ENCODE measurements at regions of chr1 and their contacts with region 1.

Region 1: GRCh38 chr1:198756470-198756869 is 117.6 kb downstream of the PTPRC start:
- DNase-seq: no peak
- ATAC-seq: peak; percentile 39
- H3K4me3 ChIP-seq: no peak overlapping the region
- H3K4me3 Mint-ChIP-seq: no peak overlapping the region
- H3K27ac ChIP-seq: no peak overlapping the region
- H3K27ac Mint-ChIP-seq: peak overlapping the region; percentile 1
- H3K4me1 ChIP-seq: no peaks in the 10 kb centered on the region
- H3K4me1 Mint-ChIP-seq: peaks cover 34% of the 10 kb centered on the region
- H3K27me3 ChIP-seq: no peaks in the 10 kb centered on the region
- H3K27me3 Mint-ChIP-seq: no peaks in the 10 kb centered on the region
- CTCF ChIP-seq: peak; percentile 15

Region 2: GRCh38 chr1:198713081-198713480 is 43.4 kb before region 1 on chr1:
- CTCF ChIA-PET with region 1: interaction called, 3 read pairs
- POLR2A ChIA-PET with region 1: interaction called, 4 read pairs
- intact Hi-C with region 1: loop called in 1 of 2 experiments (anchors 5 kb)
- DNase-seq: no peak
- ATAC-seq: no peak
- H3K4me3 ChIP-seq: no peak overlapping the region
- H3K4me3 Mint-ChIP-seq: peak overlapping the region; percentile 34
- H3K27ac ChIP-seq: no peak overlapping the region
- H3K27ac Mint-ChIP-seq: peak overlapping the region; percentile 51
- H3K4me1 ChIP-seq: peaks cover 4% of the 10 kb centered on the region
- H3K4me1 Mint-ChIP-seq: peaks cover 78% of the 10 kb centered on the region
- H3K27me3 ChIP-seq: no peaks in the 10 kb centered on the region
- H3K27me3 Mint-ChIP-seq: no peaks in the 10 kb centered on the region
- CTCF ChIP-seq: no peak

Region 3: GRCh38 chr1:198798923-198799386 is 42.5 kb after region 1 on chr1:
- CTCF ChIA-PET with region 1: no interaction called
- POLR2A ChIA-PET with region 1: no interaction called
- intact Hi-C with region 1: no loop called
- DNase-seq: no peak
- ATAC-seq: no peak
- H3K4me3 ChIP-seq: no peak overlapping the region
- H3K4me3 Mint-ChIP-seq: no peak overlapping the region
- H3K27ac ChIP-seq: no peak overlapping the region
- H3K27ac Mint-ChIP-seq: no peak overlapping the region
- H3K4me1 ChIP-seq: no peaks in the 10 kb centered on the region
- H3K4me1 Mint-ChIP-seq: peaks cover 4% of the 10 kb centered on the region
- H3K27me3 ChIP-seq: no peaks in the 10 kb centered on the region
- H3K27me3 Mint-ChIP-seq: no peaks in the 10 kb centered on the region
- CTCF ChIP-seq: no peak

Region 4: DNA sequence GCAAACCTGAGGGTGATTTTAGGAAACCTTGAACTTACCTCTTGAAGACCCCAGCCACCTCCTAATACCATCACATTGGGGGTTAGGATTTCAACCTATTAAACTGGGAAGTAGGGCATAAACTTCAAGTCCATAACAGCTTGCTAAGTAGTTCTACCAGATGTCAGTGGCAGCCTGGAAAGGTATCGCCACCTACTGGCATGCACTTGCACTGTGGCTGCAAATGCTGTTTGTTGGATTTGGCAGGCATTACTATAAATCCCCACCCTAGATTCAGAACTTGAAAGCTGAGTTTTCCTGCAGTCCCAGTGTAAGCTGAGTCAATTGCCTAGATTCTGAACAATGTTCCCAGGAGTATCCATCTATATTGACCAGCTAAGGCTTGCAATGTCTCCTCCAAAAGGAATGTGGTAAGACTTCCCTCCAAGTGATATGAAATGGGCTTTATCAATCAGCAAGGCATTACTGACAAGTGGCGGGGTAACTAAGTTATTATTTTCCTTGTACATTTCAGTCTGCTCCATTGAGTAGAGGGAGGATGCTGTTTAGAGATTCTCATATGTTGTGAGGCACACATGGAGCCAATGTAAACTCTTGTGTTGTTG is 356.9 kb after region 1 on chr1:
- CTCF ChIA-PET with region 1: interaction called, 3 read pairs
- POLR2A ChIA-PET with region 1: no interaction called
- intact Hi-C with region 1: loop called in 1 of 2 experiments (anchors 5 kb)
- DNase-seq: peak; percentile 21 to 78 (median 50)
- ATAC-seq: peak; percentile 48
- H3K4me3 ChIP-seq: no peak overlapping the region
- H3K4me3 Mint-ChIP-seq: no peak overlapping the region
- H3K27ac ChIP-seq: no peak overlapping the region
- H3K27ac Mint-ChIP-seq: no peak overlapping the region
- H3K4me1 ChIP-seq: no peaks in the 10 kb centered on the region
- H3K4me1 Mint-ChIP-seq: peaks cover 4% of the 10 kb centered on the region
- H3K27me3 ChIP-seq: no peaks in the 10 kb centered on the region
- H3K27me3 Mint-ChIP-seq: no peaks in the 10 kb centered on the region
- CTCF ChIP-seq: peak; percentile 55

Region 5: DNA sequence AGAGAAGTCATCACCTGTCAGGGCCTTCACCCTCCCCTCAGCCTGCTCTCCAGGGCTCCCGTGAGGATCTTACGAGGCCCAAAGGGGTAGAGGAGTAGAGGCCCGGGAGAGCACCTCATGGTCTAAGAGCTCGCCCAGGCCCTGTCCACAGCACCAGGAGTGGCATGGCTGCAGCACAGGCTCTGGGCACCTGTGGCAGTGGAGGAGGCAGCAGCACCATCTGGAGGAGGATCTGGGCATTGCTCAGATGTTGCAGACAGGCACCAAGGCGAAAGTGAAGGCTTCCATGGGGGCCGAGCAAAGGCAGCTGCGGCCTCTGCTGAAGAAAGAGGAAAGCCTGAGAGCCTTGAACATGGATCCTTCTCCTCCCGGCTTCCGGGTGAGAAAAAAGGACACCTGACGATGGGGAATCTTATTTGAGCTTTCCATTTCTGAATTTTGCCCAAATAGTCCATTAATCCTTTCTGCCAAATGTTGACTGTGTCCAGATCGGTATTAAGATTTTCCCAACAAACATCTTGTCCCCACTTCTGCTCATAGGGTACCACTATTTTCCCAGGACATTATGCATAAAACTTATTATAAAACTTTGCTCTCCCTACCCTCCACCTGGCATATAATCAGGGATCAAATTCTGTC is 487.1 kb after region 1 on chr1:
- CTCF ChIA-PET with region 1: no interaction called
- POLR2A ChIA-PET with region 1: no interaction called
- intact Hi-C with region 1: loop called in 1 of 2 experiments (anchors 5 kb)
- DNase-seq: peak; percentile 37 to 79 (median 53)
- ATAC-seq: peak; percentile 95
- H3K4me3 ChIP-seq: no peak overlapping the region
- H3K4me3 Mint-ChIP-seq: no peak overlapping the region
- H3K27ac ChIP-seq: no peak overlapping the region
- H3K27ac Mint-ChIP-seq: no peak overlapping the region
- H3K4me1 ChIP-seq: peaks cover 4% of the 10 kb centered on the region
- H3K4me1 Mint-ChIP-seq: no peaks in the 10 kb centered on the region
- H3K27me3 ChIP-seq: no peaks in the 10 kb centered on the region
- H3K27me3 Mint-ChIP-seq: no peaks in the 10 kb centered on the region
- CTCF ChIP-seq: peak; percentile 63

Region 6: GRCh38 chr1:200510228-200510623 is 1753.8 kb after region 1 on chr1:
- CTCF ChIA-PET with region 1: no interaction called
- POLR2A ChIA-PET with region 1: no interaction called
- intact Hi-C with region 1: loop called in 1 of 2 experiments (anchors 10 kb)
- DNase-seq: peak; percentile 26 to 82 (median 52)
- ATAC-seq: peak; percentile 79
- H3K4me3 ChIP-seq: no peak overlapping the region
- H3K4me3 Mint-ChIP-seq: no peak overlapping the region
- H3K27ac ChIP-seq: no peak overlapping the region
- H3K27ac Mint-ChIP-seq: no peak overlapping the region
- H3K4me1 ChIP-seq: no peaks in the 10 kb centered on the region
- H3K4me1 Mint-ChIP-seq: no peaks in the 10 kb centered on the region
- H3K27me3 ChIP-seq: no peaks in the 10 kb centered on the region
- H3K27me3 Mint-ChIP-seq: peaks cover 4% of the 10 kb centered on the region
- CTCF ChIP-seq: peak; percentile 99

Measured in CD4-positive, alpha-beta T cell (primary cell).